ENCODE measurements at regions of chr12 and their contacts with region 1.

Region 1: DNA sequence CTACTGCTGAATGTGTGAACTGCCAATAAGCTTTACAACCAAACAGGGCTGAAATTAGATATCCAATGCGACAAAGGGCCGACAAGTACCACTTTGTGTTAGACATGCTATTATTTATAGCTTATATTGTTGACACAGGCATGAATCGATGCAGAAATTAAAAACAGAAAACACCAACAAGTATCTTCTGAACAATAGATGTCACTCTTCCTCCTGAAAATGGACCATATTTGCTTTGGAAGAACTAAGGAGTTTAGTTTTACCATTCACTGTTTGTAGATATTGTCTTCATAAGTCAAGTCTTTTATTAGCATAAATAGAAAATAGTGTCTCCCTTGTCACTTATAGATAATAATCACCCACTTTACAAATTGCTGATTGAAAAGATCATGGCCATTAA is 86.5 kb downstream of the LRIG3 start:
- DNase-seq: peak; percentile 6
- H3K4me3 Mint-ChIP-seq: no peak overlapping the region
- H3K27ac Mint-ChIP-seq: no peak overlapping the region
- H3K4me1 Mint-ChIP-seq: no peaks in the 10 kb centered on the region
- H3K27me3 Mint-ChIP-seq: no peaks in the 10 kb centered on the region
- CTCF ChIP-seq: no peak

Region 2: DNA sequence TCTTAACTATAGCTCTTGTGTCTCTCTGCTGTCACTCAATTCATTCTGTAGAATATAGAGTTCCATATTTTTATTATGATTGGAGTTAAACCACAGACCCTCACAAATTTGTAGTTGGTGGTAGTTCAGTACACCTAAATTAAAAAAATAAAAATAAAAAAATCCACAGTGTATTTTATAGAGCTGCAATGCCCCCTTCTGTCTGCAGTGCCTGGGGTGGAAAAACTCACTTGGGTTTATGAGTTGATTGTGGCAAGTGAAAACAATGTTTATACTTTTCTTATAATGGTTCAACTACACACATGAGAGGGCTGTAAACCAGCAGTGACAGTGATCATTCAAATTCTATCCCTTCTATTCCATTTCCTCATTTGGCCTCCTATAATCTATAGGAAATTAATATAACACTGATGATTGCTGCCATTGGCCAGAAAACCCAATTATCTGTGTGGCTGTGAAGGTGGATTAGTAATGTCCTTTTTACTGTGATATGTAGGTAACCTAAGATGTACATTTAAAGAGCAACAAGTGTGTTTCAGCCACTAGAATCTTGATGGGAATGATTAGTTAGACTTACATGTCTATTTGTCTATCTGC is 253.3 kb after region 1 on chr12:
- CTCF ChIA-PET with region 1: interaction called, 5 read pairs
- POLR2A ChIA-PET with region 1: no interaction called
- intact Hi-C with region 1: loop called (anchors 1 kb)
- DNase-seq: peak; percentile 37
- H3K4me3 Mint-ChIP-seq: no peak overlapping the region
- H3K27ac Mint-ChIP-seq: no peak overlapping the region
- H3K4me1 Mint-ChIP-seq: peaks cover 33% of the 10 kb centered on the region
- H3K27me3 Mint-ChIP-seq: no peaks in the 10 kb centered on the region
- CTCF ChIP-seq: peak; percentile 79

Region 3: DNA sequence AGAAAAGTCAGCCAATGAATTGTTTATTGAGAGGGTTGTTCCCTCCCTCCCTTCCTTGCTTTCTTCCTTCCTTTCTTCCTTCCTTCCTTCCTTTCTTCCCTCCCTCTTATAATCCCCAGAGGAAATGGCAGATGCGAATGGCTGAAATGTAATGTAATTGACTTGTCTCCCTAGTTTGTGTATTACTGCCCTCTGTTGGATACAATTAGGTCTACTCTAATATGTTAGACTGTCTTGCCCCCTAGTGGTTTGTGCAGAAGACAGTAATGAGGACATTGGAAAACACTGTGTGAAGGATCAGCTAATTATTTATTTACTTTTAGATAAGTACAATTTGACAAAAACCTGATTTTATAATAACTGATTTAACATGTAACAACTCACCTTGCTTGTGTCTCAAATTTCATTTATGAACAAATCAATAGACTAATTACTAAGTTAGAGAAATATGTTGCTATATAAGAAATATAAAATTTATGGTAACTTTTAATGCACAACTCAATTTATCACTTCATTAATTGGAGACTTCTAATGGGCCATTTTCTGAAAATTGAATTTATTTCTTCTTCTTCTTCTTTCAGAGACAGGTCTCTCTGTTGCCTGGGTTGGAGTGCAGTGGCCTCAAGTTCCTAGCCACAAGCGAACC is 316.3 kb after region 1 on chr12:
- CTCF ChIA-PET with region 1: interaction called, 9 read pairs
- POLR2A ChIA-PET with region 1: no interaction called
- intact Hi-C with region 1: loop called (anchors 5 kb)
- DNase-seq: peak; percentile 84
- H3K4me3 Mint-ChIP-seq: no peak overlapping the region
- H3K27ac Mint-ChIP-seq: no peak overlapping the region
- H3K4me1 Mint-ChIP-seq: peaks cover 11% of the 10 kb centered on the region
- H3K27me3 Mint-ChIP-seq: no peaks in the 10 kb centered on the region
- CTCF ChIP-seq: peak; percentile 91